ENCODE measurements at regions of chr9 and their contacts with region 1.

Region 1: GRCh38 chr9:87497604-87498045 is at the start of gene DAPK1:
- DNase-seq: peak; percentile 95
- H3K4me3 ChIP-seq: peak within 1 kb of the TSS; percentile 48 to 55; a peak in 3 of 4 replicates
- H3K27ac ChIP-seq: peak within 1 kb of the TSS in 1 of 2 experiments; percentile 81; a peak in 2 of 4 replicates
- H3K4me1 ChIP-seq: peaks cover 4 to 15% of the 10 kb centered on the region in 2 experiments; a peak in 3 of 4 replicates
- H3K27me3 ChIP-seq: peaks cover 17% of the 10 kb centered on the region; the same call in 1 of the 2 replicates
- CTCF ChIP-seq: no peak
- EP300 ChIP-seq: no peak
- RAD21 ChIP-seq: peak; percentile 37
- polyA plus RNA-seq, gene DAPK1: 0.61 and 0.70 TPM in 2 replicates

Region 2: DNA sequence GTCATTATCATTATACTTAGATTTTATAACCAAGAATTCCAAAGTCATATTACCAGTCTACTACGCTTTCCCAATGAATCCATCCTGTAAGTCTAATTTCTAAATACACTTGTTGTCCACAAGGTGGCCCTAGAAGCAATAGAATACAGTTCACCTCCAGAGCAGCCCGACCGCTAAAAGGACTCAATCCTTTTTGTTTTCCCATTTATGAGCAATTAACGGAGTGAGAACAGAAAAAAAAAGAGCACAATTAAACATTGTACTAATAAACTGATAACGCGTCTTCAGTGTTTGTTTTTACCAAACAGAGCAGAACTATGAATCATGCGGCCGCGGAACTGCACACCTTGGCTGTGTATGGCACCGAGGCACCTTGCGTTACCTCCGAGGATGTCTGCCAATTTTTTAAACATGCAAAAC is 160.7 kb before region 1 on chr9:
- CTCF ChIA-PET with region 1: interaction called, 33 read pairs
- POLR2A ChIA-PET with region 1: interaction called, 8 read pairs
- DNase-seq: peak; percentile 60
- H3K4me3 ChIP-seq: peak overlapping the region; percentile 53 to 64
- H3K27ac ChIP-seq: no peak overlapping the region
- H3K4me1 ChIP-seq: peaks cover 9 to 11% of the 10 kb centered on the region in 2 experiments; a peak in 2 of 4 replicates
- H3K27me3 ChIP-seq: peaks cover 6% of the 10 kb centered on the region; the same call in 1 of the 2 replicates
- CTCF ChIP-seq: peak; percentile 76
- EP300 ChIP-seq: no peak; a peak in 1 of 4 replicates
- RAD21 ChIP-seq: peak; percentile 94

Region 3: DNA sequence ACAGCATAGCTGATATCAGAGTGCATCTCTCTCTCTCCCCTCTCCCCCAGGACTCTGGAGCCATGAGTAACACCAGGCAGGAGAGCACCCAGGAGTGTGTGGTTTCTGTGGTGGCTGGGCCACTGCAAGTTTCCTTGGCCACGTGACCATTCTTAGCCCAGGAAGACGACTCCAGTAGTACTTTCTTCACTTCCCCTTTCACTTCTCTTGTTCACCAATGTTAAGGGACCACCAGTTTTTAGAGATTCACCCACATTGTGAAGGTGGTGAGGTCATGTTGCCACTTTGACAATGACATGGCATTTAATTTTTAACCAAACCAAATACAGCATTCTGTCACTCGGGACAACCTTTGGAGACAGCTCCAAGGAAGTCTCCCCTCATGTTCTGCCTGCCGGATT is 17.8 kb before region 1 on chr9:
- CTCF ChIA-PET with region 1: interaction called, 15 read pairs
- POLR2A ChIA-PET with region 1: no interaction called
- DNase-seq: no peak
- H3K4me3 ChIP-seq: no peak overlapping the region
- H3K27ac ChIP-seq: no peak overlapping the region
- H3K4me1 ChIP-seq: peaks cover 0 to 8% of the 10 kb centered on the region in 2 experiments; a peak in 1 of 4 replicates
- H3K27me3 ChIP-seq: no peaks in the 10 kb centered on the region
- CTCF ChIP-seq: no peak
- EP300 ChIP-seq: no peak
- RAD21 ChIP-seq: no peak

Region 4: DNA sequence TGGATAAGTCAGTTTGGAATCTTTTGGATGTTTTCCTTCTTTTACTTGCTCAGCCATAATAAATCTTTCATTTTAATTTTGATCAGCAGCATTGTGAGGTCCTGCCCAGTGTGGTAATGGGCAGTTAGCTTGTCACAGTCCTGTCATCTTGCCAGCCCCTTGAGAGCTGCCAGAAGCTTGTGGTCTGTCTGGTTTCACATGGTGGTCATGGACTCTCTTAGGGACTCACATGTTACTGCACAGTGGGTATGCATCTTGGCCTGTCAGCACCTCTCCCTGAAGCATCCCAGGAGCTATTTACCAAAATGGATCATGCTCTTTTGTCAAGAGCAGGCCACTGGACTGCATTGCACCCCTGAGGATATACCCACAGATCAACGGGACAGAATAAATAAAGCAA is 60.4 kb after region 1 on chr9:
- CTCF ChIA-PET with region 1: no interaction called
- POLR2A ChIA-PET with region 1: no interaction called
- DNase-seq: peak; percentile 54
- H3K4me3 ChIP-seq: no peak overlapping the region
- H3K27ac ChIP-seq: no peak overlapping the region
- H3K4me1 ChIP-seq: peaks cover 0 to 18% of the 10 kb centered on the region in 2 experiments; a peak in 1 of 4 replicates
- H3K27me3 ChIP-seq: no peaks in the 10 kb centered on the region
- CTCF ChIP-seq: no peak
- EP300 ChIP-seq: peak in 1 of 2 experiments; percentile 32; a peak in 1 of 4 replicates
- RAD21 ChIP-seq: no peak

Region 5: GRCh38 chr9:87656485-87656884 is 158.9 kb after region 1 on chr9:
- CTCF ChIA-PET with region 1: interaction called, 12 read pairs
- POLR2A ChIA-PET with region 1: interaction called, 5 read pairs
- DNase-seq: no peak
- H3K4me3 ChIP-seq: no peak overlapping the region
- H3K27ac ChIP-seq: no peak overlapping the region
- H3K4me1 ChIP-seq: peaks cover 0 to 1% of the 10 kb centered on the region in 2 experiments; a peak in 2 of 4 replicates
- H3K27me3 ChIP-seq: no peaks in the 10 kb centered on the region; the same call in 1 of the 2 replicates
- CTCF ChIP-seq: no peak
- EP300 ChIP-seq: no peak
- RAD21 ChIP-seq: peak; percentile 24; the same call in 1 of the 2 replicates

Measured in SK-N-SH (cell line).